ENCODE measurements at regions of chr19 and their contacts with region 1.

Region 1: DNA sequence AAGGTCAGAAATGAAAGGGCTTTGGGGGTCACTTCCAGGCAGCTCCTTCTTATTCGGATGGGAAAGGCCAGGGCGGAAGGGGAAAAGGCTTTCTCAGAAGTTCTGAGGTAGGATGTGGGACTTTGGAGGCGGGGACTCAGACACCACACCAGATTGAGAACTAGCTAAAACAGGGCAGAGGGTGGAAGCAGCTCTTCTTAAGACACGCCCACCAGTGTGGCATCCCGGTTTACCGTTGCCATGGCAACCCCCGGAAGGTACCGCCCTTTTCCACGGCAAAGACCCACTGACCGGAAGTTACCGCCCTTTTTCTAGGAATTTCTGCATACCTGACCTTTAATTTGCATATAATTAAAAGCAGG is 3.8 kb upstream of the LILRA5 start:
- H3K4me3 Mint-ChIP-seq: no peak overlapping the region
- H3K27ac Mint-ChIP-seq: peak overlapping the region; percentile 74
- H3K4me1 Mint-ChIP-seq: peaks cover 66% of the 10 kb centered on the region
- H3K27me3 Mint-ChIP-seq: no peaks in the 10 kb centered on the region

Region 2: DNA sequence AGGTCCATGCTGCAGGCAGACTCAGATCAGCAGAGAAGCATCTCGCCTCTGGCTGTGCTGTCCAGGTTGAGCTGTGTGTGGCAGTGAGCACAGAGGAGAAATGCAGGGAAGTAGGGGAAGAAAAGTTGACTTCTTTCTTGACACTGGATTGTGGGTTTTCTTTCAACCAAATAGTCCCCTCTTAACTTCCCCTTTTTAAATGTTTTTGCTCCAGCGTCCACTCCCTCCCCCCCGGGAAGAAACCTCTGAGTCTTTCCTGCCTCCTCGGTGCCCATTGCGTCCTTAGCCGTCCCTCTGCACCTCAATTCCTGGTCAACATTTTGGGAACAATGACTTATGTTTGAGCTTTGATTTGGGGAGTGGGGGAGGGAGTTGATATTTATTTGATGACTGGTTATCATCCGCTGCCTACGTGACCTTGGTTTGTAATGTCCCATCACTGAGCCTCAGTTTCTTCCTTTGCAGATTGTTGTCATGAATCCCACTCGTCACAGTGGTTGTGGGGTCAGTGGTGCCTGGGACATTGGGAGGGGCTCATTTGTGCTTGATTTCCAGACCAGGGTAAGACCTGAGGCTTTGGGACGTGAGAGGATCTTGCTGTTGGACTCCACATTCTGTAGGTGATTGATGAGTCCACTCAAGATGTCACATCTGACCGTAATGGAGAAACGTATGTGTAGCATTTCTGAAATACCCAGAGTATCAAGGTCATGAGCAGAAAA is 35.6 kb before region 1 on chr19 and contains the start of gene LILRB2:
- intact Hi-C with region 1: loop called (anchors 5 kb)
- H3K4me3 Mint-ChIP-seq: peak within 1 kb of the TSS; percentile 98
- H3K27ac Mint-ChIP-seq: peak within 1 kb of the TSS; percentile 90
- H3K4me1 Mint-ChIP-seq: peaks cover 100% of the 10 kb centered on the region
- H3K27me3 Mint-ChIP-seq: no peaks in the 10 kb centered on the region

Measured in dendritic cell treated with granulocyte-macrophage colony-stimulating factor and Interleukin-4, amounts not matched to agents 40 ng/mL and 50 ng/mL, for 4 days (primary cell).